ENCODE measurements at regions of chr11 and their contacts with region 1.

Region 1: GRCh38 chr11:93697611-93698010 is 36.1 kb downstream of the CEP295 start:
- DNase-seq: no peak
- ATAC-seq: no peak
- H3K4me3 ChIP-seq: no peak overlapping the region
- H3K27ac ChIP-seq: no peak overlapping the region
- H3K4me1 ChIP-seq: no peaks in the 10 kb centered on the region
- H3K27me3 ChIP-seq: no peaks in the 10 kb centered on the region
- CTCF ChIP-seq: no peak

Region 2: DNA sequence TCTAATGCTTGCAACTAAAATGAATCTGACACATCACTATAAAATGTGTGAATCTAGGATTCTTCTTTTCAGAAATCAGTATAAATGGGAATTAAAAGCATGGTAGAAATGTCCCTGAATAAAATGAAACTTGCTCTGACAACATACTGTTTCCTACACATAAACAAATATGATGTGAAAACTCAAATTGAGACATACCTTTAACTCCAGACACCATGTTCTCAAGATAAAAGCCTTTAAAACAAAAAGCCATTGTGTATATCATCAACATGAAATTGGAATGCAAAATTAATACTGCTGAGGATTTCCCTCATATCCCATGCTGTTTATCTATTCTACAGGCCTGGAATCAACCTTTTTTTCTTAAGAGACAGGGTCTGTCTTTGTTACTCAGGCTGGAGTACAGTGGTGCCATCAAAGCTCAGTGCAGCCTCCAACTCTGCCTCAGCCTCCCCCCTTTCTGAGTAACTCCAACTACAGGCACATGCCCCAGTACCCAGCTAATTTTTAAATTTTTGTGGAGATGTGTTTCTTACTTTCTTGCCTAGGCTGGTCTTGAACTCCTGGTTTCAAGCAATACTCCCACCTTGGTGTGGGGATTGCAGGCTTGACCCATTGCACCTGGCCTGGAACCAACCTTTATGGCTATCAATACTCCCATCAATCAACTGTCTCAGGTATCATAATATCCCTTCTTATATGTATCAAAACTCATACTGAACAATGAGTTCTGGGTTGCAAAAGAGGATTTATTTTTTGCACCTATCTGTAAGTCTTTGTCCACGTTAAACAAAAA is 37.0 kb after region 1 on chr11:
- intact Hi-C with region 1: loop called in 1 of 2 experiments (anchors 5 kb)
- DNase-seq: no peak
- ATAC-seq: no peak
- H3K4me3 ChIP-seq: no peak overlapping the region
- H3K27ac ChIP-seq: no peak overlapping the region
- H3K4me1 ChIP-seq: peaks cover 23% of the 10 kb centered on the region
- H3K27me3 ChIP-seq: no peaks in the 10 kb centered on the region
- CTCF ChIP-seq: no peak

Region 3: GRCh38 chr11:93791493-93791892 is 93.9 kb after region 1 on chr11:
- intact Hi-C with region 1: loop called in 1 of 2 experiments (anchors 5 kb)
- DNase-seq: no peak
- ATAC-seq: no peak
- H3K4me3 ChIP-seq: no peak overlapping the region
- H3K27ac ChIP-seq: no peak overlapping the region
- H3K4me1 ChIP-seq: peaks cover 14% of the 10 kb centered on the region
- H3K27me3 ChIP-seq: no peaks in the 10 kb centered on the region
- CTCF ChIP-seq: no peak